Caco-2 (cell line): ENCODE measurements at regions of chr12 and their contacts with region 1.

Region 1: DNA sequence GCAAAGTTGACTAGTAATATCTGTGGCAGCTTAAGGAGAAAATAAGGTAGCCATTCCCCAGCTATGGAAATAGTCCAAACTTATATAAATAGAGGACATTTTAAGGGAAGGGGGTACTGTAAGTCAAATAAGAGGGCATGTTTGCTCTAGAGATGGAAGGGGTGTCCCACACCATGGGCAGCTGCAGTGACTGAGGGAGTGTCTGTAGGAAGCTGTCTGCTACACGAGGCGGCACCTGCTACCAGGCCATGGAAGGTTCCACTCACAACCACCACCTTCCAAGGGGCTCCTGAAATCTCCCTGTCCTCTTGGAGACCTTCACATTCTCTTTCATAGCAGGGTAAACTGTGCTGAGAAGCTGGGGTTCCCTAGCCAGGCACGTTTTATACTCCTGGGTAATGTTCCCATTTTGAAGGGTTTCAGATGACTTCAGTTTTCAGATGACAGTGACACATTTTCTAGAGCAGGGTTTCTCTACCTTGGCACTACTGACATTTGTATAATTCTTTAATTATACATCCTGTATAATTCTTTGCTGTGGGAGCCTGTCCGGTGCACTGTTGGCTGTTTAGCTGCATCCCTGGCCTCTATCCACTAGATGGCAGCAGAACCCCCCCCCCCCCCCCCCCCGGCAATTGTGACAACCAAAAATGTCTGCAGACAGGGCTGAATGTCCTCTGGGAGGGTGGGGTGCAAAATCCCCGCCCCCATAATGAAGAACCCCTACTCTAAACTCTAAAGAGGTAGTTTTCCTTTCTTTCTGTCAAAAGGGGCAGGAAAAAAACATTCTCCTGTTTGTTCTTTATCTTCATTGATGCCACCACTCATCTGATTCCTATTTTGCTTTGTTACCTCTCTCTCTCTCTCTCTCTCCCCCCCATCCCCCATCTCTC is 11.6 kb upstream of the SMCO2 start:
- DNase-seq: peak in 1 of 2 experiments; percentile 19
- H3K4me3 ChIP-seq: no peak overlapping the region
- H3K4me3 Mint-ChIP-seq: no peak overlapping the region
- H3K27ac Mint-ChIP-seq: no peak overlapping the region
- H3K4me1 ChIP-seq: 0 out of 2 replicates have a peak, but pooled peaks cover 3% of the 10 kb centered on the region
- H3K4me1 Mint-ChIP-seq: peaks cover 16% of the 10 kb centered on the region
- H3K27me3 ChIP-seq: no peaks in the 10 kb centered on the region
- H3K27me3 Mint-ChIP-seq: no peaks in the 10 kb centered on the region
- CTCF ChIP-seq: peak; percentile 53 to 77

Region 2: GRCh38 chr12:26246483-26247111 is 1188.3 kb before region 1 on chr12:
- CTCF ChIA-PET with region 1: no interaction called
- POLR2A ChIA-PET with region 1: no interaction called
- intact Hi-C with region 1: no loop called
- DNase-seq: peak; percentile 59 to 81
- H3K4me3 ChIP-seq: no peak overlapping the region
- H3K4me3 Mint-ChIP-seq: no peak overlapping the region
- H3K27ac Mint-ChIP-seq: peak overlapping the region; percentile 82
- H3K4me1 ChIP-seq: peaks cover 11% of the 10 kb centered on the region; the same call in 1 of the 2 replicates
- H3K4me1 Mint-ChIP-seq: peaks cover 8% of the 10 kb centered on the region
- H3K27me3 ChIP-seq: no peaks in the 10 kb centered on the region
- H3K27me3 Mint-ChIP-seq: no peaks in the 10 kb centered on the region
- CTCF ChIP-seq: no peak

Region 3: GRCh38 chr12:27424631-27425230 is 10.2 kb before region 1 on chr12:
- CTCF ChIA-PET with region 1: interaction called, 15 read pairs
- POLR2A ChIA-PET with region 1: no interaction called
- intact Hi-C with region 1: no loop called
- DNase-seq: peak in 1 of 2 experiments; percentile 51
- H3K4me3 ChIP-seq: no peak overlapping the region
- H3K4me3 Mint-ChIP-seq: no peak overlapping the region
- H3K27ac Mint-ChIP-seq: no peak overlapping the region
- H3K4me1 ChIP-seq: 0 out of 2 replicates have a peak, but pooled peaks cover 3% of the 10 kb centered on the region
- H3K4me1 Mint-ChIP-seq: peaks cover 22% of the 10 kb centered on the region
- H3K27me3 ChIP-seq: no peaks in the 10 kb centered on the region
- H3K27me3 Mint-ChIP-seq: no peaks in the 10 kb centered on the region
- CTCF ChIP-seq: peak; percentile 74 to 79

Region 4: GRCh38 chr12:27488479-27488878 is 53.6 kb after region 1 on chr12:
- CTCF ChIA-PET with region 1: no interaction called
- POLR2A ChIA-PET with region 1: no interaction called
- intact Hi-C with region 1: loop called (anchors 2 kb)
- DNase-seq: no peak
- H3K4me3 ChIP-seq: no peak overlapping the region
- H3K4me3 Mint-ChIP-seq: no peak overlapping the region
- H3K27ac Mint-ChIP-seq: no peak overlapping the region
- H3K4me1 ChIP-seq: peaks cover 3% of the 10 kb centered on the region; the same call in 1 of the 2 replicates
- H3K4me1 Mint-ChIP-seq: no peaks in the 10 kb centered on the region
- H3K27me3 ChIP-seq: no peaks in the 10 kb centered on the region
- H3K27me3 Mint-ChIP-seq: no peaks in the 10 kb centered on the region
- CTCF ChIP-seq: peak; percentile 21 to 22

Region 5: GRCh38 chr12:27561535-27562350 is 126.8 kb after region 1 on chr12:
- CTCF ChIA-PET with region 1: interaction called, 5 read pairs
- POLR2A ChIA-PET with region 1: interaction called, 6 read pairs
- intact Hi-C with region 1: loop called (anchors 1 kb)
- DNase-seq: no peak
- H3K4me3 ChIP-seq: no peak overlapping the region
- H3K4me3 Mint-ChIP-seq: no peak overlapping the region
- H3K27ac Mint-ChIP-seq: no peak overlapping the region
- H3K4me1 ChIP-seq: no peaks in the 10 kb centered on the region
- H3K4me1 Mint-ChIP-seq: peaks cover 12% of the 10 kb centered on the region
- H3K27me3 ChIP-seq: no peaks in the 10 kb centered on the region
- H3K27me3 Mint-ChIP-seq: no peaks in the 10 kb centered on the region
- CTCF ChIP-seq: no peak

Region 6: GRCh38 chr12:27635349-27635972 is 200.5 kb after region 1 on chr12:
- CTCF ChIA-PET with region 1: interaction called, 4 read pairs
- POLR2A ChIA-PET with region 1: interaction called, 4 read pairs
- intact Hi-C with region 1: loop called (anchors 1 kb)
- DNase-seq: peak in 1 of 2 experiments; percentile 55
- H3K4me3 ChIP-seq: no peak overlapping the region
- H3K4me3 Mint-ChIP-seq: no peak overlapping the region
- H3K27ac Mint-ChIP-seq: no peak overlapping the region
- H3K4me1 ChIP-seq: peaks cover 4% of the 10 kb centered on the region; the same call in 1 of the 2 replicates
- H3K4me1 Mint-ChIP-seq: peaks cover 28% of the 10 kb centered on the region
- H3K27me3 ChIP-seq: no peaks in the 10 kb centered on the region
- H3K27me3 Mint-ChIP-seq: no peaks in the 10 kb centered on the region
- CTCF ChIP-seq: peak; percentile 69 to 83

Region 7: DNA sequence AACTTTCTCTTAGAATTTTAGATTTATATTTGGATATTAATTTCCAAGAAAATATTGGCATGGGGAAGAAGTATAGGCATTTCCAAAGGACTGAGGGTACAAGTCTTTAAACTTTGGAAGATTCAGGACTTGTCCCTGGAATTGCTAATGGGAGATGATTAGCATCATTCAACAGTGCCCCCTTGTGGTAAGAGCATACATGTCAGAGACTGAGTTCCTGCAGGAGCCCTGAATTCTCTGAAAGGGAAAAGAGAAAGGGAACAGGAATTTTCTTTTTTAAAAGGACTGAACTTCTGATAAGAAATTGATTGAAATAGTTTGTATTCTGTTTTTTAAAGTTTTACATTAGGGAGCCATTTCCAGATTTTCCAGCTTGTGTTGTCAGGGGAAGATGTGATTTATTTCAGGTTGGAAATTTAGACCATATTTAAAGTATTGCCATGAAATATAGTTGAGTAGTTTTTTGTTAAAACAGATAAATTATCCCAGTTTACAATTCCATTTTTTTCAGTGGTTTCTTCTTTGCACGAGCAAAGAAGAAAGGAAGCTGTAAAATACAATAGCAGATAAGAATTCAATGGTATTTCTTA is 217.3 kb after region 1 on chr12:
- CTCF ChIA-PET with region 1: no interaction called
- POLR2A ChIA-PET with region 1: no interaction called
- intact Hi-C with region 1: loop called (anchors 1 kb)
- DNase-seq: peak; percentile 69 to 88
- H3K4me3 ChIP-seq: no peak overlapping the region
- H3K4me3 Mint-ChIP-seq: no peak overlapping the region
- H3K27ac Mint-ChIP-seq: no peak overlapping the region
- H3K4me1 ChIP-seq: no peaks in the 10 kb centered on the region
- H3K4me1 Mint-ChIP-seq: peaks cover 12% of the 10 kb centered on the region
- H3K27me3 ChIP-seq: no peaks in the 10 kb centered on the region
- H3K27me3 Mint-ChIP-seq: no peaks in the 10 kb centered on the region
- CTCF ChIP-seq: peak; percentile 91 to 96

Region 8: DNA sequence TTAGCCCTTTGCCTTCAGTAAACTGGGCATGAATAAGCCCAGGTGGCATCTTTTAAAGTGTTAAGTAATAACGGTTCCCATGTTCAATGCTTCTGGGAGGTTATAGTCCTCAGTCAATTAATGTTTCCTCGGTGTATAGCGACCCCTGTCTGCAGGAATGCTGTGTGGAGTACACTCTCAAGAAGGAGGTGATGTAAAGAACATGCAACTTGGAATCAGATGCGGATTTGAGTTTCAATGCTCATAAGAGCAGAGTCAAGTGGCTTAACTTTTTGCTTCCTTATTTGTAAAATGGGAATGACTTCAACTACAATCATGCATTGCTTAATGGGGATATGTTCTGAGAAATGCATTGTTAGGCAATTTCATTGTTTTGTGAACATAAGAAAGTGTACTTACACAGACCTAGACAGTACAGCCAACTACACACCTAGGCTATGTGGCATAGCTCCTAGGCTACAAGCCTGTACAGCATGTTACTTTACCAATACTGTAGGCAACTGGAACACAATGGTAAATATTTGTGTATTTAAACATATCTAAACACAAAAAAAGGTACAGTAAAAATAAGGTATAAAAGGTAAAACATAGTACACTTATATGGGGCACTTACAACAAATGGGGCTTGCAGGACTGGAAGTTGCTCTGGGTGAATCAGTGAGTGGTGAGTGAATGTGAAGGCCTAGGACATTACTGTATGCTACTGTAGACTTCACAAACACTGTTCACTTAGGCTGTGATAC is 269.0 kb after region 1 on chr12:
- CTCF ChIA-PET with region 1: no interaction called
- POLR2A ChIA-PET with region 1: no interaction called
- intact Hi-C with region 1: loop called (anchors 1 kb)
- DNase-seq: peak; percentile 86 to 92
- H3K4me3 ChIP-seq: no peak overlapping the region
- H3K4me3 Mint-ChIP-seq: no peak overlapping the region
- H3K27ac Mint-ChIP-seq: peak overlapping the region; percentile 72
- H3K4me1 ChIP-seq: no peaks in the 10 kb centered on the region
- H3K4me1 Mint-ChIP-seq: no peaks in the 10 kb centered on the region
- H3K27me3 ChIP-seq: no peaks in the 10 kb centered on the region
- H3K27me3 Mint-ChIP-seq: no peaks in the 10 kb centered on the region
- CTCF ChIP-seq: peak; percentile 93 to 95